ENCODE measurements at regions of chr6 and their contacts with region 1.

Region 1: DNA sequence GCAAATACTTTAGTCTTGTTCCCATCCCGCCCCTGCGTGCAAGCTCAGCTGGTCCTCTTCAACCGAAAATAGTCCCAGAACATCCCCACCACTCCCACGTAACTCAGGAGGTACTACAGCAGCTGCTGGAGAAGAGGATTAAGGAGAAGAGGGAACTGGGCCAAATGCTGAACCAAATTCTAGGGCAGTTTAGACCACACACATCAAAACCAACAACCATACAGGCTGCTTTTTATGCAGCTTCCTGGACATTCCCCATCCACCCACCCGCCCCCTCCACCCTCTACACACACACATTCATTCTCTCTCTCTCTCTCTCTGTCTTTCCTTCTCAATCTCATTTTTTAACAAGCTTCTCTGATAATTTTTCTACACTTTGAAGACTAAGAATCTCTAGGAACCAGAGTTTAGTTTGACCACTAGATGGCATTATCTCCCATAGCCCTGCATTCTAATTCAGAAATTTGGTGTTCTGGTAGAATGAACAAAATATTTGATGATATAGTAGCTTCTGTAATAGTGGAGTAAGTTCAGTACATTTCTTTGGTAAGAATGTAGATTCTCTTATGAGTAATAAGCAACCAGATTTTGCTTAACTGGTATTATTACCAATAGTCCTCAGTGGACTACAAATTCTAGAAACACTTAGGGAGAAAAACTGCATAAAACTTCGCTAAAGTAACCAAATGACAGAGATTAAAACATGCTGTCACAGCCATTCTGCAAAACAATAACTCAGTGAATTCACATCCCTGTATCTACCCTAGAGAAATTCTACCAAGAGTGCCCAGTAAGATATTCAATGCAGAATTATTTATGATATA is 52.1 kb upstream of the BEND6 start:
- DNase-seq: no peak
- ATAC-seq: no peak
- H3K4me3 ChIP-seq: no peak overlapping the region
- H3K4me1 ChIP-seq: peaks cover 6% of the 10 kb centered on the region
- CTCF ChIP-seq: peak; percentile 31

Region 2: GRCh38 chr6:56764081-56764566 is 138.7 kb before region 1 on chr6:
- intact Hi-C with region 1: no loop called
- DNase-seq: peak in 1 of 3 donors; percentile 41
- ATAC-seq: peak; percentile 67
- H3K4me3 ChIP-seq: no peak overlapping the region
- H3K4me1 ChIP-seq: peaks cover 3% of the 10 kb centered on the region
- CTCF ChIP-seq: no peak

Region 3: DNA sequence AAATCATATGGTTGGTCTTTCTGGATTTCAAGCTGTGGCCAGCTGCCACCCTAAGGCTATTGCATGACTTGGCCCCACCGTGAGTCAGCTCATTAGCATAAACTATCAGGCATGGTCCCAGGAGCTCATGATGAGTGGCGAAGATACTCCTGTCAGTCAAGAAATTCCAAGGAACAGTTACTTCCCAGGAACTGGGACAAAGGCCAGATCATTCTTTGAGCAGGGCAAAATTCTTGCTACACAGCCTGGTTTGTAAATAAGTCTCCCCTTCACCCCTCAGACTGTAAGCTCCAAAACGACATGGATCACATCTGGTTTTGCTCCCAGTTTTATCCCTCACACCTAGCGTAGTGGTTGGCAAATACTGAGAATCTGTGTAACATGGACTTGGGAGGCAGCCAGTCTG is 110.7 kb after region 1 on chr6:
- intact Hi-C with region 1: loop called in 1 of 2 experiments (anchors 10 kb)
- DNase-seq: no peak
- ATAC-seq: no peak
- H3K4me3 ChIP-seq: no peak overlapping the region
- H3K4me1 ChIP-seq: no peaks in the 10 kb centered on the region
- CTCF ChIP-seq: no peak

Region 4: DNA sequence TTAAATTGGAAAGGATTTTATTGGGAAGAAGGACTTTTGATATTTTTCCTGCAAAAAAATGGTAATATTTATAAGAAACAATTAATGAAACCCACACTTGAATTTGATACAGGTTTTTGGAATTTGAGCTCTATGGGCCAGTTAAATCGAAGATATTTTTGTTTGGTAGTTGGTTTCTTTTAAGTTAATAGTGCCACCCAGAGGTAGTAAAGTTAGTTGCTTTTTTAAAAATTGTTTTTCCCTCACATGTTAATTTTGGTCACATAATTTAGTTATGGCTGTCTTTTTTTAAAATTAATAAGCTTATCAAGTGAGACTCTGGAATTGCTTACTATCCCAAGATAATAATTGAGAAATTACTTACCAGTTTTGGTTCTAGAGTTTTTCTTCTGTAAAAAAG is 421.7 kb after region 1 on chr6:
- intact Hi-C with region 1: loop called (anchors 2 to 5 kb)
- DNase-seq: no peak
- ATAC-seq: no peak
- H3K4me3 ChIP-seq: no peak overlapping the region
- H3K4me1 ChIP-seq: no peaks in the 10 kb centered on the region
- CTCF ChIP-seq: no peak